ENCODE measurements at regions of chr1 and their contacts with region 1.

Region 1: DNA sequence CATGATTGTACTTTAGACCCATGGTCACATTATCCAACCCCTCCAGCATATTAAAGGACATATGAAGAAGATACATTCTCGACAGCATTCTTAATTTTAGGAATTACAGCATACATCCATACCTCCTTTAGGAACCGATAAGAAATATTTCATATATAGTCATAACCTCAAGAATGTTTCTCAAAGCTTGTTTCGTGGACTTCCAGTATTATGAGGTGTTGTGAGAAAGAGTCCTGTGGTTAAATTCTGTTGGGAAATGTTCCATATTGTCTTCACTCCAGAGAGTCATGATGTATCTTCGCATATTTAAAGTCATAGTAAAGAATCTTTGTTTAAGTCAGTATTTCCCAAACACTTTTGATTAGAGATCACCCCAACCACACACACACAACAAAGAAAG is 321.0 kb upstream of the SNX7 start:
- DNase-seq: no peak
- H3K4me3 ChIP-seq: no peak overlapping the region
- H3K27ac ChIP-seq: no peak overlapping the region
- H3K4me1 ChIP-seq: no peaks in the 10 kb centered on the region
- H3K27me3 ChIP-seq: no peaks in the 10 kb centered on the region
- CTCF ChIP-seq: no peak
- EP300 ChIP-seq: no peak
- POLR2A ChIP-seq: no peak

Region 2: GRCh38 chr1:97787231-97787630 is 553.3 kb before region 1 on chr1:
- in situ Hi-C with region 1: no loop called
- intact Hi-C with region 1: loop called (anchors 5 kb)
- DNase-seq: no peak
- H3K4me3 ChIP-seq: no peak overlapping the region
- H3K27ac ChIP-seq: no peak overlapping the region
- H3K4me1 ChIP-seq: no peaks in the 10 kb centered on the region
- H3K27me3 ChIP-seq: no peaks in the 10 kb centered on the region
- CTCF ChIP-seq: no peak
- EP300 ChIP-seq: no peak
- POLR2A ChIP-seq: no peak

Region 3: GRCh38 chr1:98306517-98307089 is 33.9 kb before region 1 on chr1:
- in situ Hi-C with region 1: no loop called
- intact Hi-C with region 1: loop called (anchors 1 kb)
- DNase-seq: no peak
- H3K4me3 ChIP-seq: no peak overlapping the region
- H3K27ac ChIP-seq: no peak overlapping the region
- H3K4me1 ChIP-seq: no peaks in the 10 kb centered on the region
- H3K27me3 ChIP-seq: no peaks in the 10 kb centered on the region
- CTCF ChIP-seq: no peak
- EP300 ChIP-seq: no peak
- POLR2A ChIP-seq: no peak